ENCODE measurements at regions of chr6 and their contacts with region 1.

Region 1: GRCh38 chr6:148451690-148452089 is 109.1 kb downstream of the SASH1 start:
- DNase-seq: peak in 1 of 5 donors; percentile 52
- ATAC-seq: peak in 1 of 4 donors; percentile 52
- H3K4me3 ChIP-seq: no peak overlapping the region
- H3K27ac ChIP-seq: peak overlapping the region in 7 of 12 donors; percentile 16 to 48 (median 23)
- H3K4me1 ChIP-seq: peaks cover 0 to 61% (median 41%) of the 10 kb centered on the region in 12 donors
- H3K27me3 ChIP-seq: no peaks in the 10 kb centered on the region
- CTCF ChIP-seq: peak in 2 of 12 donors; percentile 3 to 15
- POLR2A ChIP-seq: no peak

Region 2: GRCh38 chr6:148414836-148415235 is 36.9 kb before region 1 on chr6:
- intact Hi-C with region 1: loop called in 1 of 10 experiments (anchors 5 kb)
- DNase-seq: no peak
- ATAC-seq: peak in 3 of 4 donors; percentile 46 to 76 (median 66)
- H3K4me3 ChIP-seq: no peak overlapping the region
- H3K27ac ChIP-seq: no peak overlapping the region
- H3K4me1 ChIP-seq: peaks cover 4 to 47% (median 26%) of the 10 kb centered on the region in 12 donors
- H3K27me3 ChIP-seq: no peaks in the 10 kb centered on the region
- CTCF ChIP-seq: no peak
- POLR2A ChIP-seq: no peak

Region 3: GRCh38 chr6:148761527-148762011 is 309.9 kb after region 1 on chr6:
- intact Hi-C with region 1: no loop called
- DNase-seq: no peak
- ATAC-seq: peak; percentile 32 to 40 (median 40)
- H3K4me3 ChIP-seq: peak overlapping the region in 8 of 12 donors; percentile 13 to 46 (median 37)
- H3K27ac ChIP-seq: peak overlapping the region in 9 of 12 donors; percentile 14 to 87 (median 55)
- H3K4me1 ChIP-seq: peaks cover 0 to 52% (median 23%) of the 10 kb centered on the region in 12 donors
- H3K27me3 ChIP-seq: no peaks in the 10 kb centered on the region
- CTCF ChIP-seq: no peak
- POLR2A ChIP-seq: no peak